Psoas muscle (tissue), 8 donors: ENCODE measurements at regions of chr10 and their contacts with region 1.

Region 1: DNA sequence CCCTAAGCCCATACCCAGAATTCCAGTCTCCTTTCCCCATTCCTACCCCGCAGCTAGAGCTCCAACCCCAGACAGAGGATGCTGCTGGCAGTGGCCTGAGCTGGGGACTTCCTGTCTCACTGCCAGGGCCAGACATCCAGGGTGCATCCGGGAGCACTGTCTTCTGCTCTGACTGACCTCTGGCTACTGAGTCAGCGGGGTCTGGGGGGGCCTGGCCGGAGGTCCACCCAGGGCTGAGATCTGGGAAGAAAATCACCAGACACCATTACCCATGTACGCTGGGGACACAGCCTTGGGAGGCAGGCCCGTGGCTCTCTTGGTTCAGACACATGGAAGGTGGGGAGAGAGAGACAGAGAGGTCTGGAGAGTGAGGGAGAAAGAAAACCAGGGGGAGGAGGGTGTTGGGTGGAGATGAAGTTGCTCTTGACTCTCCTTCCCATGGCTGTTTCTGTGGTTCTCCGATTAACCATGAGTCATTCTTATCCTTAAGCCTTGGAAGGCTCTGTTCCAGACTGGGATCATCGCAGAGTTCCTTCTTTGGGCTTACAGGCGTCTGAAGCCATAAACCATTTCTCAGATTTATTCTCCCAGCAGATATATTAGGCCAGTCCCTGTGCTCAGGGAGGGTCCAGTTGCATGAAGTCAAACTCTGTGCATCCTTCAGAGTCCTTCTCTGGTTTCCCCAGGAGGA is 23.6 kb downstream of the TSPAN15 start:
- DNase-seq: peak in 1 of 2 donors; percentile 64
- ATAC-seq: peak; percentile 72 to 92 (median 84)
- H3K4me3 ChIP-seq: peak overlapping the region; percentile 28
- H3K27ac ChIP-seq: peak overlapping the region; percentile 89
- H3K4me1 ChIP-seq: peaks cover 74% of the 10 kb centered on the region
- H3K27me3 ChIP-seq: no peaks in the 10 kb centered on the region
- CTCF ChIP-seq: no peak

Region 2: DNA sequence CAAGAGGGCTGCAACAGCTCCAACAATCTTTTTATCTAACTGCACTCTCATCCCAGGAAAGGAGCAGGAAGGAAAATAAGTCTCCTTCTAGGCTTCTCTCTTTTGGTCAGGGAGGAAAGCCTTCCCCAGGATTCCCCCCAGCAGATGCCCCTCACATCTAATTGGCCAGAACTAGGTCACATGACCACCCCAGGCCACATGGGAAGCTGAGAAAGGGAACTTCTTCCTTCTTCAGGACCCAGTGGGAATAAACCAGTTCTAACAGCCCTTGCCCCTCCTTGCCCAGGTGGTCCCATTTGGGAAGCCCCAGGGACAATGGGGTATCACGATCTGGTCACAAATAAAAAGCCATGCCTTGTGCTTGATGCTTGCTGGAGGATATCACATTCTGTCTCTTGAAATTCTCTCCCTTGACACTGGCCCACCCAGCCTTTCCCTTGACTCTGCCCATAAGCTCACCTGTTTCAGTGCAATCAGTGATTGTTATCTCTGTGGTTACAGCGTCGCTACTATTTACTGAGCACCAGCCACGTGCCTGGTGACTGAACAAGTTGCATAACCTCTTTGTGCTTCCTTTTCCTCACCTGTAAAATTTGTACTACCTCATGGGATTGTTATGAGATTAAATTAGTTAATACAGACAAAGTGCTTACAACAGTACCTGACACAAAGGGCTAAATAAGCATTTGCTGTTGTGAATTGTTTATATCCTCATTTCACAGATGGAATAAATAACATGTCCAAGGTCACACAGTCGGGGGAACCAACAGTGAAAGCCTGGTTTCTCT is 49.2 kb before region 1 on chr10:
- intact Hi-C with region 1: no loop called
- DNase-seq: no peak
- ATAC-seq: no peak
- H3K4me3 ChIP-seq: no peak overlapping the region
- H3K27ac ChIP-seq: no peak overlapping the region
- H3K4me1 ChIP-seq: peaks cover 11% of the 10 kb centered on the region
- H3K27me3 ChIP-seq: no peaks in the 10 kb centered on the region
- CTCF ChIP-seq: no peak

Region 3: GRCh38 chr10:69458426-69459108 is 16.3 kb before region 1 on chr10:
- intact Hi-C with region 1: loop called in 1 of 2 experiments (anchors 2 kb)
- DNase-seq: peak; percentile 40 to 70
- ATAC-seq: peak in 3 of 4 donors; percentile 72 to 78 (median 75)
- H3K4me3 ChIP-seq: peak overlapping the region; percentile 32
- H3K27ac ChIP-seq: peak overlapping the region; percentile 91
- H3K4me1 ChIP-seq: peaks cover 84% of the 10 kb centered on the region
- H3K27me3 ChIP-seq: no peaks in the 10 kb centered on the region
- CTCF ChIP-seq: no peak